ENCODE measurements at regions of chr1 and their contacts with region 1.

Region 1: DNA sequence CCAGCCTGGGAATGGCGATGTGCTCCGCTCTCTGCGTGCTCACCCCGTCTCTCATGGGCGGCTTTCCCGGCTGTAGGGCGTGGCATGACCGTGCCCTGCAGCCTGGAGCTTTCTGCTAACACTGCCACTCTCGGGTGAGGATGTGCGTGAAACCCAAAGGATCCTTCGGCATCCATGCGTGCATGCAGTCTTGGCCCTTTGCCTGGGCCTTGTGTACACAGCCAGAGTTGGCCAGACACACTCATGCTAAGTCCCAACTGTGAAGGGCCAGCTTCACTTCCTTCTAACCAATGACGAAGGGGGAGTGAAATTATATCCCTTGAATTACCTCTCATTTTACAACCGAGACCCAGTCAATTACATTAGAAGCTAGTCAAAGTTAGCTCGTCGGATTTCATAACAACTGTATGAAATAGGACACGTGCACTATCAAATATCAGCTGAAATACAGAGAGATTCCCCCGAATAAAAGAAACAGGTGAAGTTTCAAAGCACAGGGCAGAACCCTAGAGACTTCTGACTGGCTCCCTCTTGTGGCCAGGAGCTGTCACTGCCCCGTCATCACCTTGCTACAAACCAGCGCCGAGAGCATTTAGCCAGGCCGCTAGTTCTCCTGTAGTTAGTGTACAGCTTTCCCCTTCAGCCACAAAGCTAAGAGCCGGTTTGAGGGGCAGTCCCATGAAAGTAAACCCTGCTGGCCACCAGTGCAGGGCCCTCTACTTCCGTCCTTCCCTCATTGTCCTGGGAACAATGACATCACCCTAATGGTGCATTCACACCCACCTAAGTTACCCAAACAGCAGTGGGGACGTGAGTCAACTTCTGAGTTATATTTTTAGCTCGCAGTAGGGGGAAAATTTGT is 63.4 kb upstream of the COA6 start:
- DNase-seq: peak; percentile 88

Region 2: DNA sequence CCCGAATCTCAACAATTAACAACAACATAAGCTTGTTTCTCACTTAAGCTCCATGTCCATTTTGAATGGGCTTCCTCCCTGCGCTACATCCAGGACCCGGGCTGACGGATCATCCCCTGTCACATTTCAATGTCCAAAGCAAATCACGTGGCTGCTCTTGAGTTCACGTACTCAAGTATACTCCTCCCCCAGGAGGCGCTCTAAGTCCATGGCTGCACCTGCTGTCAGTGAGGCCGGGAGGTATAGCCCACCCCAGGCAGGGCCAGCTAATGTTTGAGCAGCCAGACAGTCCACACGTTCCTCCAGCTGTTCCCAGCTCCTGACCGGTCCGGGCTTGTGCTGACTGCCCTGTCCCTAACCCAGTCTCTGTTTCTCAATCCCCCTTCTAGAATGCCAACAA is 184.5 kb before region 1 on chr1:
- CTCF ChIA-PET with region 1: interaction called, 43 read pairs
- POLR2A ChIA-PET with region 1: interaction called, 3 read pairs
- DNase-seq: peak; percentile 84

Region 3: GRCh38 chr1:234148350-234148749 is 161.5 kb before region 1 on chr1:
- CTCF ChIA-PET with region 1: no interaction called
- POLR2A ChIA-PET with region 1: no interaction called
- DNase-seq: no peak

Region 4: DNA sequence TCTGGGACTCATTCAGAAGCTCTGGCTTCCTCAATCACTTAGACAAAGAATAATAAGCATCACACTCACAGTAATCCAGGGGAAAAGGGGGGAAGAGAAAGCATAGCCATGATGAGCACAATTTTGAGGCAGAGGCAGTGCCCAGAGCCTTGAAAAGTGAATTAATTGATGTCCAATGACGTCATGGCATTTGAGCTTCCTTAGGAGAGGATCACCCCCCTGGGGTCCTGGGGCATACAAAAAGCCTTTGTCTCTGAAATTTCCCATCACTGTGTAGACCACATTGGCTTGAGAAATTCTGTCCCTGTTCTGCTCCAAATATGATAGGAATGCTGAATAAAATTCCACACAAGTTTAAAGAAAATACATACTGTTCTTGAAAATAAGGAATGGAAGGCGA is 20.9 kb before region 1 on chr1:
- CTCF ChIA-PET with region 1: interaction called, 15 read pairs
- POLR2A ChIA-PET with region 1: no interaction called
- DNase-seq: no peak

Region 5: GRCh38 chr1:234320549-234320948 is 10.7 kb after region 1 on chr1:
- CTCF ChIA-PET with region 1: interaction called, 16 read pairs
- POLR2A ChIA-PET with region 1: interaction called, 3 read pairs
- DNase-seq: no peak